Mammary epithelial cell (primary cell): ENCODE measurements at regions of chr10 and their contacts with region 1.

Region 1: GRCh38 chr10:73096449-73097304 is at the start of gene P4HA1:
- DNase-seq: peak; percentile 98
- H3K4me3 ChIP-seq: peak within 1 kb of the TSS; percentile 79 to 99 (median 98)
- H3K27ac ChIP-seq: peak within 1 kb of the TSS; percentile 96
- H3K4me1 ChIP-seq: peaks cover 7% of the 10 kb centered on the region
- H3K27me3 ChIP-seq: no peaks in the 10 kb centered on the region
- CTCF ChIP-seq: peak; percentile 25 to 83
- total RNA-seq, gene P4HA1: 43.7 to 48.6 TPM

Region 2: DNA sequence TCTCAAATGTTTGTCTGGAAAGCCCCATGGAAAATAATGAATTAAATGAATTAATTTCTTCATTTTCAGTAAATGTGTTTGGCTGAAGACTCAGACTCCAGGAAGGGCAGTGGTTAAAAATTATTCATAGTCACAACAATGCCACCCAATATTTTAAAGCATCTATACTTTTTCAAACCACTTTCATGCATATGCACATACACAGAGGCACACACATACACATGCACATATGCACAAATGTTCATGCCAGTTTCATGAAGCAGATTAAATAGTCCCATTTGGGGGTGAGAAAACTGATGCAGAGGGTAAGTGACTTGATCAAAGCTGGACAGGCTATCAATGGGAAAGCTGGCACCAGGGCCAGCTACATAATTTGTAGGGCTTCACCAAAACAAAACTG is 140.7 kb before region 1 on chr10:
- CTCF ChIA-PET with region 1: no interaction called
- dilution Hi-C with region 1: no loop called
- in situ Hi-C with region 1: no loop called
- intact Hi-C with region 1: no loop called
- DNase-seq: no peak
- H3K4me3 ChIP-seq: no peak overlapping the region
- H3K27ac ChIP-seq: no peak overlapping the region
- H3K4me1 ChIP-seq: no peaks in the 10 kb centered on the region
- H3K27me3 ChIP-seq: no peaks in the 10 kb centered on the region
- CTCF ChIP-seq: no peak

Region 3: DNA sequence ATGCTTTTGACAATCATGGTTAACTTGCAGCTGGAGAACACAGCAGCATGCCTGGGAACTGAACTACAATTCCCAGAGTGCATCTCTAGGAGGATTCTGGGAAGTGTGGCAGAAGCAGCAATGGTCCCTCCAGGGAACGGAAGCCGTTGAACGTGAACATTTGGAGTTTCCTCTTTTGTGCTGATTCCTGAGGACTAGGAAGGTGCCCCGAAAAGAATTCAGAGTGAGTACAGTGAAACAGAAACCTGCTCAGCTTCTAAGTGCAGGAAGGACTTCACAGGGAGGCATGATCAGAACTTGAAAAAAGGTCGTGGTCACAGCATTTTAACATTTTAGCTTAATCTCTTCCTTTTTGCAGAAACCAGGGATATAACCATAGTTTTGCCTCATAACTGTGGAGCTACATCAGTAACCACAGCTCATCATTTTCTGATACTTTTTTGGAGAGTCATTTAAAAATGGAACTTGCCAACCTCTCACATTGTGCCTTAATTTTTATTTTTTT is 13.7 kb after region 1 on chr10 and contains the start of gene NUDT13:
- CTCF ChIA-PET with region 1: interaction called, 5 read pairs
- dilution Hi-C with region 1: no loop called
- in situ Hi-C with region 1: no loop called
- intact Hi-C with region 1: loop called (anchors 1 kb)
- DNase-seq: peak; percentile 83
- H3K4me3 ChIP-seq: peak within 1 kb of the TSS; percentile 55 to 89 (median 76)
- H3K27ac ChIP-seq: peak within 1 kb of the TSS; percentile 98
- H3K4me1 ChIP-seq: peaks cover 15% of the 10 kb centered on the region
- H3K27me3 ChIP-seq: no peaks in the 10 kb centered on the region
- CTCF ChIP-seq: no peak
- total RNA-seq, gene NUDT13: 1.3 to 2.8 TPM

Region 4: DNA sequence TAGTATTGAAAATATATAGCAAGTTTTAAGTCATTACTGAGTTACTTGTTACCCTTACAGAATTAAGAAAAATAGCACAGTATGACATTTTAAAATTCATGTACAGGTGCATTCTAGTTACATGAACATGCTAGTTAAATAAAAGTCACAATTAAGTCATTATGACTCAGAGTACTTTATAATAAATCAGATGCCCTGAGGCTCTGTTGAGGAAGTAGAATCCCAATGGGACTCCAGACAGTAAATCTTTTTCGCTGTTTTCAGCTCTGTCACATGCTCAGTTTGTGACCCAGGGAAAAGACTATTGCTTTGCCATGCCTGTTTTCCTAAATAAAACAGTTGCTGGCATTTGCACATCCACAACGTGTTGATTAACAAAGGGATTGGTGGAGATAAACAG is 34.6 kb after region 1 on chr10:
- CTCF ChIA-PET with region 1: no interaction called
- dilution Hi-C with region 1: loop called (anchors 5 kb)
- in situ Hi-C with region 1: no loop called
- intact Hi-C with region 1: loop called (anchors 2 kb)
- DNase-seq: peak; percentile 53
- H3K4me3 ChIP-seq: no peak overlapping the region
- H3K27ac ChIP-seq: no peak overlapping the region
- H3K4me1 ChIP-seq: peaks cover 11% of the 10 kb centered on the region
- H3K27me3 ChIP-seq: no peaks in the 10 kb centered on the region
- CTCF ChIP-seq: no peak

Region 5: DNA sequence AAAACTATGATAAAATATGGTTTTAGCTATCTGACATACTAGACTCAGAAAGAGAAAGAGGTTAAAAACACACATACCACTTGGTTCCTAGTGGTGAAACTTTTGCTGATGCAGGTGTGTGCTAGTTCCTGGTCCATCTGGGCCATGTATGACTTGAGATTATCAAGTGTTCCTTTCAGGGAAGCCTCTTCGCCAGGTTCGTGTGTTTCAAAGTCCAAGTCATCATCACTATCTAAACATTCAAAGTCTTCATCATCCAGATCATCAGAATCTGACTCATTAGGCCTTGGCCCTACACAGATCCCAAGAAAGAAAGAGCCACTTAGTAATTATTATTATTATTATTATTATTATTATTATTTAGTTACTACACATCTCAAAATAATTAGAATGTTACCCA is 40.0 kb after region 1 on chr10:
- CTCF ChIA-PET with region 1: no interaction called
- dilution Hi-C with region 1: loop called (anchors 5 kb)
- in situ Hi-C with region 1: no loop called
- intact Hi-C with region 1: loop called (anchors 2 kb)
- DNase-seq: no peak
- H3K4me3 ChIP-seq: no peak overlapping the region
- H3K27ac ChIP-seq: no peak overlapping the region
- H3K4me1 ChIP-seq: peaks cover 2% of the 10 kb centered on the region
- H3K27me3 ChIP-seq: no peaks in the 10 kb centered on the region
- CTCF ChIP-seq: no peak

Region 6: GRCh38 chr10:73159038-73159648 is 62.5 kb after region 1 on chr10:
- CTCF ChIA-PET with region 1: no interaction called
- dilution Hi-C with region 1: no loop called
- in situ Hi-C with region 1: loop called in 1 of 2 experiments (anchors 10 kb)
- intact Hi-C with region 1: loop called (anchors 1 kb)
- DNase-seq: peak; percentile 30
- H3K4me3 ChIP-seq: no peak overlapping the region
- H3K27ac ChIP-seq: no peak overlapping the region
- H3K4me1 ChIP-seq: no peaks in the 10 kb centered on the region
- H3K27me3 ChIP-seq: no peaks in the 10 kb centered on the region
- CTCF ChIP-seq: peak; percentile 70 to 72

Region 7: DNA sequence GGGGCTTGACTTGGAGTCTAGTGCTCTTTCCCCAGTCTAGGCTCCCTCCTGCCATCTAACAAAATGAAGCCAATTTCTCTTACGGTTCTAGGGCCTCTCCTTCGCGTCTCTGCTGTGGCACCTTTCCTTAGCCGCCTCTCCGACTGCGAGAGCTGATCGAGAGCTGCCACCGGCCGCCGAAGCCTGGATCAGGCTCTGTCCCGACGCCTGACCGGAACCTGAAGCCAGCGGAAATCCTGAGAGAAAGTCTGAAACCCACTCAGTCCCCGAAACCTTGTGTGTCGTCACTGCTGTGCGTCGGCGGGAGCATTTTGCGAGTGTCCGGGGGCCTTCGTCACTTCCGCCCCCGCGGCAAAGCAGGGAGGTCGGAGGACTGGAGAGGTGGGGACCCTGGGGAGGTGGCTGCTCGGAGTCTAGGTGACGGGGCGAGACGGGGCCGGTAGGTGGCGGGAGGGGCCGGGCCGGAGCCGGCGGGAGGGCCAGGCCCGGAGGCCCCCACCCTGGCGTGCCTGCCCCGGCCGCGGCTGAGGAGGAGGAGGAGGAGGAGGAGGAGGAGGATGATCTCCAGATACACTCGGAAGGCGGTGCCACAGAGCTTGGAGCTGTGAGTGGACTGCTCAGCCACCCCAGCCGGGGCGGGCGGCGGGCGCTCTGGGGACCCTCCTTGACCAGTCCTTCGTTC is 71.2 kb after region 1 on chr10 and contains the starts of genes ECD and FAM149B1:
- CTCF ChIA-PET with region 1: no interaction called
- dilution Hi-C with region 1: no loop called
- in situ Hi-C with region 1: loop called in 1 of 2 experiments (anchors 10 kb)
- intact Hi-C with region 1: no loop called
- DNase-seq: peak; percentile 96
- H3K4me3 ChIP-seq: peak within 1 kb of the TSS; percentile 73 to 89 (median 84)
- H3K27ac ChIP-seq: peak within 1 kb of the TSS; percentile 95
- H3K4me1 ChIP-seq: peaks cover 4% of the 10 kb centered on the region
- H3K27me3 ChIP-seq: no peaks in the 10 kb centered on the region
- CTCF ChIP-seq: peak in 1 of 2 donors; percentile 19
- total RNA-seq, gene ECD: 29.7 to 37.0 TPM
- total RNA-seq, gene FAM149B1: 17.6 to 20.5 TPM

Region 8: GRCh38 chr10:73218431-73219191 is 121.9 kb after region 1 on chr10:
- CTCF ChIA-PET with region 1: no interaction called
- dilution Hi-C with region 1: no loop called
- in situ Hi-C with region 1: no loop called
- intact Hi-C with region 1: loop called (anchors 2 kb)
- DNase-seq: no peak
- H3K4me3 ChIP-seq: no peak overlapping the region
- H3K27ac ChIP-seq: no peak overlapping the region
- H3K4me1 ChIP-seq: no peaks in the 10 kb centered on the region
- H3K27me3 ChIP-seq: no peaks in the 10 kb centered on the region
- CTCF ChIP-seq: peak; percentile 48 to 57